Heart right ventricle (tissue), 16 donors: ENCODE measurements at regions of chr12 and their contacts with region 1.

Region 1: GRCh38 chr12:126874427-126875026 is 1392.4 kb upstream of the TMEM132C start:
- DNase-seq: peak; percentile 43 to 52
- ATAC-seq: peak in 7 of 8 donors; percentile 38 to 83 (median 64)
- H3K4me3 ChIP-seq: no peak overlapping the region
- H3K27ac ChIP-seq: no peak overlapping the region
- H3K4me1 ChIP-seq: no peaks in the 10 kb centered on the region
- H3K27me3 ChIP-seq: peaks cover 0 to 12% (median 0%) of the 10 kb centered on the region in 7 donors
- CTCF ChIP-seq: peak; percentile 69 to 92 (median 88)

Region 2: DNA sequence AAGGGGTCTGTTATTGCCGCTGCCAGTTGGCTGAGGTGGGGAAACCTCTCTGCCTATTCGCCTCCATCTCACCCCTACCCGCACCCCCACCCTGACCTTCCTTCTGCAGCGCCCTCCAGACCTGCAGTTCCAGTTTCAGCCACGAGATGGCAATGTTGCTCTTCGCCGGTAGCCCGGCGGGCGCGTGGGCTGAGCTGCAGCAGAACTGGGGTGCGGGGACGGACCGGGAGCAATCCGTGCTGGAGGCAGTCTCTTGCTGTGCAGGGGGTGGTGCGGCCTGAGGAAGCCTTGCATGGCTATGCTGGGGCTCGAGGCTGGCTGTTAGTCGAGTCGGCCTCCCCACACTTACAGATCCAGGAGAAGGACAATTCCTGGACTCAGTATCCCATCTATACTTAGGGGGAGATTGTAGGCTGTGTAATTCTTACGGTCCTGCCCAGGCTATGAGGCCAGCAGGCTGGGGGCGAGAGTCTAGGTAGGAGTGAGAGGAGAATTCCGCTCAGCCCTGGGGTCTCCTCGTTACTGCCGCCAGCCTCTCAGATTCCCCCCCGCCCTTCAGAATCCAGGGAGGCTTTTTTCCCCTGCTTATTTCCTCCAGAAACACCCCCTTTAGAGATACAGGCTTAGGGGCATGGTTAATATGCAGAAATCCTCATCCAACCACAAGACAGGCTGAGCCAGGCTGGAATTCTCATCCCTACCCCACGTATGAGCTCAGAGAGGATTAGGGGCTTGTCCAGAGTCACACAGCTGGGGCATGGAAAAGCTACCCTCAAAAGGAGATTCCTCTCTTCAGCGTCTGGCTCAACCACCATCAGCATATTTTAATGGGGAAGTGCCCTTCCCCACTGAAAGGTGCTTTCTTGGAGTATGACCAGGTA is 1691.1 kb before region 1 on chr12:
- intact Hi-C with region 1: loop called in 5 of 10 experiments (anchors 5 to 10 kb)
- DNase-seq: peak; percentile 67 to 78
- ATAC-seq: peak; percentile 50 to 84 (median 73)
- H3K4me3 ChIP-seq: no peak overlapping the region
- H3K27ac ChIP-seq: no peak overlapping the region
- H3K4me1 ChIP-seq: peaks cover 3 to 30% (median 11%) of the 10 kb centered on the region in 9 donors
- H3K27me3 ChIP-seq: peaks cover 7 to 72% (median 46%) of the 10 kb centered on the region in 7 donors
- CTCF ChIP-seq: peak; percentile 92 to 100 (median 99)

Region 3: DNA sequence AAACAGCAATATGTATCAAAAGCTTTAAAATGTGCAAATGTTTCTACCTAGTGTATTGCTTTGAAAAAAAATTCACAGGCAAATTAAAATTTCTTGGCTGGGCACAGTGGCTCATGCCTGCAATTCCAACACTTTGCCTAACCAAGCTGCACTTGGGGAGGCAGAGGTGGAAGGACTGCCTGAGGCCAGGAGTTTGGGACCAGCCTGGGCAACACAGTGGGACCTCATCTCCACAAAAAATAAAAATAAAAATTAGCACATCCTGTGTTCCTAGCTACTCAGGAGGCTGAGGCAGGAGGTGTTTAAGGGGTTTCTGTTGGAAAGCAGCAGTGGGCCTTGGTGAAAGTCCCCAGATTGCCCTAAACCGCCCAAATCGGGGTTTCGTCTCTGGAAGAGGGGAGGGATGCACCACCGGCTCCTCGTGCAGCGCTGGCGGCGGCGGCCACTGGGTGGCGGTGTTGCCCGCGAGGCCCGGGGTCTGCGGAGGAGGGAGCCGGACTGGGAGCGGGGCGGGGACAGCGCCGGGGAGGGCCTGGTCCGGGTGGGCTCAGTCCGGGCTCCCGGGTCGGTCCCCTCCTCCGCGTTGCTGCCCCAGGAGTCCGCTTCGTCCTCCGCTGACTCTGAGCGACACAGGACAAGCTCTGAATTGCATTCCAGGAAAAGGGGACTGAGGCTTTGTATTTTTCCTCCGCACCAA is 1543.7 kb before region 1 on chr12:
- intact Hi-C with region 1: loop called in 1 of 10 experiments (anchors 10 kb)
- DNase-seq: peak; percentile 51 to 76
- ATAC-seq: peak; percentile 86 to 94 (median 92)
- H3K4me3 ChIP-seq: peak overlapping the region in 9 of 10 donors; percentile 23 to 62 (median 49)
- H3K27ac ChIP-seq: peak overlapping the region in 2 of 10 donors; percentile 46 to 49
- H3K4me1 ChIP-seq: peaks cover 0 to 11% (median 4%) of the 10 kb centered on the region in 9 donors
- H3K27me3 ChIP-seq: peaks cover 0 to 46% (median 34%) of the 10 kb centered on the region in 7 donors
- CTCF ChIP-seq: peak; percentile 81 to 96 (median 90)

Region 4: DNA sequence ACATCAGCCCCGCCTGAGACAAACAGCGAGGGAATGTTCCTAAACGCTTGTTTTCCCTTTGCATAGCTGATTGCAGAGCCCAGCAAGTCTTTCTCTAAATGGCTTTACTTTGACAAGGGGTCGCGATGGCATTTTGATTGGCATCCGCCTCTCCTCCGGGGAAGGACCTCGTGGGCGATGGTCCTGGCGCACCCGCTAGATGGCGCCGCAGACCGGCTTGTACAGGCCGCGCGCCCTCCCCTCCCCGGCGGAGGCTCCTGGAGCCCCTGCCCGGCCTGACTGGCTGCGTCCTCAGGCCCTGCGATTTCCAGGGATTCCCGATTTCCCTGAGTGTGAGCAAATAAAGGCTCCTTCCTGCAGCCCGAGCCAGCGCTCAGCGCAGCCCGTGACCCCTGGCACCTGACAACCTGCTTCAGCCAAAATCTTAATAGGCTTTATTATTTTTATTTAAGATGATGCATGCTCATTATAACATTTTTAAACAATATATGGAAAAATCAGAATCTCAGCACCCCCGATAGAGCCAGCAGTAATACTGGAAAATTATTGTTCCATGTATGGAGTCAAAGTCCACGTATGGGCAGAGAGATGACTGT is 1341.0 kb before region 1 on chr12:
- intact Hi-C with region 1: loop called in 3 of 10 experiments (anchors 2 to 10 kb)
- DNase-seq: peak; percentile 5 to 19
- ATAC-seq: peak in 4 of 8 donors; percentile 38 to 86 (median 54)
- H3K4me3 ChIP-seq: no peak overlapping the region
- H3K27ac ChIP-seq: no peak overlapping the region
- H3K4me1 ChIP-seq: no peaks in the 10 kb centered on the region
- H3K27me3 ChIP-seq: peaks cover 0 to 52% (median 25%) of the 10 kb centered on the region in 7 donors
- CTCF ChIP-seq: peak; percentile 21 to 75 (median 67)

Region 5: DNA sequence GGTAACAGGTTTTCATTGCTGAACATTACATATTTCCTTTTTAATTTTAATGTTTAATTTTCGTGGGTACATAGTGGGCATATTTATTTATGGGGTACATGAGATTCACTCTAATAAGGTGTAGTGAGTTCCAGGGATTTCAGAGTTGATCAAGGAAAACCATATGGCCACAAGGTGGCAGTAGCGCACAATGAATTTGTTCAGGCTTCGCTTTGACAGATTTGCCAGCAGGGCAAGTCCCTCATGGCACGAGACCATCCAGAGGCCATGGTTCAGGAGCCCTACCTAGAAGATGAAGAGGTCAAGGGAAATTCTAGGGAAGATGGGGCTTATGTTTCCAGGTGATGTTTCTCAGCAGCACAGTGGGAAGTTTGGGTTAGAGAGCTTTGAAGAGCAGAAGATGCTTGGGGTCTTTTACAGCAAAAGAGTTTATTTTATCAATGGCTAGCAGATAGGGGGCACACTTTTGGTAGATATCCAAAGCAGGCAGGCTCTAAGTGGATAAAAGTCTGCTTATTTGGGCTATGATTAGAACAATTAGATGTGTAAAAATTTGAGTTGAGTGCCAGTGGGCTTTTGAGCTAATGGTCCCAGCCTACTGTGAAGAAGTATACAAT is 804.9 kb before region 1 on chr12:
- intact Hi-C with region 1: loop called in 1 of 10 experiments (anchors 5 kb)
- DNase-seq: no peak
- ATAC-seq: no peak
- H3K4me3 ChIP-seq: no peak overlapping the region
- H3K27ac ChIP-seq: no peak overlapping the region
- H3K4me1 ChIP-seq: no peaks in the 10 kb centered on the region
- H3K27me3 ChIP-seq: peaks cover 0 to 6% (median 0%) of the 10 kb centered on the region in 7 donors
- CTCF ChIP-seq: peak in 7 of 9 donors; percentile 22 to 69 (median 42)

Region 6: GRCh38 chr12:126582231-126582630 is 292.3 kb before region 1 on chr12:
- intact Hi-C with region 1: no loop called
- DNase-seq: no peak
- ATAC-seq: peak in 2 of 8 donors; percentile 44 to 47
- H3K4me3 ChIP-seq: no peak overlapping the region
- H3K27ac ChIP-seq: no peak overlapping the region
- H3K4me1 ChIP-seq: no peaks in the 10 kb centered on the region
- H3K27me3 ChIP-seq: no peaks in the 10 kb centered on the region
- CTCF ChIP-seq: no peak

Region 7: DNA sequence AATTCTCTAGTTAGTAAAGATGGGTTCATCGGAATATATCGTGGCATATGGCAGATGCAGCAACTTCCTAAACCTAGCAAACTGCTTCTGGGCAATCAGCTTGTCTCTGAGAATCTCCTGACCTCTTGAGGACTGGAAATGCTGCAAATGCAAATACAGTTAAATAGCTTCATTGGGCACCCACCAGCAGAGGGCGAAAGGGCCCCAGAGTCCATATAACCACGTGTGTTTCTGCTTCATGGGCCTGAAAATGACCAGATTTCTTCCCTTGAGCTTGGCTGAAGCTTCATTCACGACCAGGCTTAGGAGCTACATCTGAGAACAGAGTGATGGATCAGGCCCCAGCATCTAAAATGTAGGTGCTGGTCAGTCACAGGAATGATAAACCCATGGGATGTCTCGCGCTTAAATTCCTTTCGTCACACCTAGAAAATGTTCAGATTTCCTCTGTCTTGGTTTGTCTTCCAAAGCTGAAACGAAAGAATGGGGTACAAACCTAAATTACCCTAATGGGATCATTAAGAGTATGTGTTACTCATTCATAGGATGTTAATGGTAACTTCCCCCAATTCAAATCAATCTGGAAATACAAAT is 90.1 kb before region 1 on chr12:
- intact Hi-C with region 1: loop called in 2 of 10 experiments (anchors 5 to 10 kb)
- DNase-seq: peak; percentile 13
- ATAC-seq: peak in 1 of 8 donors; percentile 51
- H3K4me3 ChIP-seq: no peak overlapping the region
- H3K27ac ChIP-seq: no peak overlapping the region
- H3K4me1 ChIP-seq: no peaks in the 10 kb centered on the region
- H3K27me3 ChIP-seq: peaks cover 0 to 7% (median 0%) of the 10 kb centered on the region in 7 donors
- CTCF ChIP-seq: peak; percentile 14 to 62 (median 46)